ENCODE measurements at regions of chr1 and their contacts with region 1.

Region 1: GRCh38 chr1:110034451-110035235 is at the start of gene STRIP1:
- H3K4me3 ChIP-seq: peak within 1 kb of the TSS; percentile 80
- H3K27ac ChIP-seq: peak within 1 kb of the TSS; percentile 76
- H3K4me1 ChIP-seq: peaks cover 4% of the 10 kb centered on the region; the same call in 1 of the 2 replicates
- CTCF ChIP-seq: no peak

Region 2: DNA sequence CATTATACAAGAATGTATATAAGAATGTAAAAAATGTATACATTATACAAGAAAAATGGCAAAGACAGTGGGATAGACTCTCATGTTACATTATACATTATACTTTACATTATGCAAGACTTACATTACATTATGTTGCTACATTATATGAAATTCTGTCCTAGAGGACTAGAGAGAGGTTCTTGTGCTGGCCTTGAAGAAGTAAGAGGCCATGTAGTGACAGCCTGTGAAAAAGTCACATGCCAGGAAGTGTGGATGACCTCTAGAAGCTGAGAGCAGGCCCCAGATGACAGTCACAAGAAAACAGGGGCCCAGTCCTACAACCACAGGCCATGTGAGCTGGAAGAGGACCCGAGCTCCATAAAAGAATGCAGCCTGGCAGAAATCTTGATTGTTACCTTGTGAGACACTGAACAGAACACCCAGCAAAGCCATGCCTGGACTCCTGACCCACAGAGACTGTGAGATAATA is 80.6 kb before region 1 on chr1:
- CTCF ChIA-PET with region 1: no interaction called
- POLR2A ChIA-PET with region 1: no interaction called
- H3K4me3 ChIP-seq: no peak overlapping the region
- H3K27ac ChIP-seq: no peak overlapping the region
- H3K4me1 ChIP-seq: no peaks in the 10 kb centered on the region
- CTCF ChIP-seq: no peak

Region 3: DNA sequence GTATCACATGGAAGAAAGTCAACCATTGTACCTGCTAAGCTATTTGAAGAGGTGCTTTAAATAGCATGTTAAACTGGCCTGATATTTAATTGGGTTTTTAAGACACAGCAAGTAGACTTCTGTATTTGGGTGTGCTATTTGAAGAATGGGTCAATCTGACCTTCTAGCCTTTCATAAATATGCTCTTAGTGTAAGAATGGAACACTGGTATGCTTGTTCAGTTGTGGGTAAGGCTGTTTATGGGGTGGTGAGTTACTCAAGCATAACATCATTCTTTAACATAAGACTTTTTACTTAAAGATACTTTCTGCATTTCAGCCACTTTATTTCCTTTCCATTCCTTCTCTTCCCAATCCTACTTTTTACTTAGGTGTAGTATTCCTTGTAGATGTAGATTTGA is 28.7 kb before region 1 on chr1:
- CTCF ChIA-PET with region 1: interaction called, 17 read pairs
- POLR2A ChIA-PET with region 1: no interaction called
- H3K4me3 ChIP-seq: no peak overlapping the region
- H3K27ac ChIP-seq: no peak overlapping the region
- H3K4me1 ChIP-seq: peaks cover 25% of the 10 kb centered on the region
- CTCF ChIP-seq: no peak

Region 4: GRCh38 chr1:110011527-110012041 is 23.1 kb before region 1 on chr1:
- CTCF ChIA-PET with region 1: interaction called, 17 read pairs
- POLR2A ChIA-PET with region 1: no interaction called
- H3K4me3 ChIP-seq: no peak overlapping the region
- H3K27ac ChIP-seq: no peak overlapping the region
- H3K4me1 ChIP-seq: peaks cover 7% of the 10 kb centered on the region; the same call in 1 of the 2 replicates
- CTCF ChIP-seq: peak; percentile 42; the same call in 1 of the 2 replicates

Region 5: DNA sequence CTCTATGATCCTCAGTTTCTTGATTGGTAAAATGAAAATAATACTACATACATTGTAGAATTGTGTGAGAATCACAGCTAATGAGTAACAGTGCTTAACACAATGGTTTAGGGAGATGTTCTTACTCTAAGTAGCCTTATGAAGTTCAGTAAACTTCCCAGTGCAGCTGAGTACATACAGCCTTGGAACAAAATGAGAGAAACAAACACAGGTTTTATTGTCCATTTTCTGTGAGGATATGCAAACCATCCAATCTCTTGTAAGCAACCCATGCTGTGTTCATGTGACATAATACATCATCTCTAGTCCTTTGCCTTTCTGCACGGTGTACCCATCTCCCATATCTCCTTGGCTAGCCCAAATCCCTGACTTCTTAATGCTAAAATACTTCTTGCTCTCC is 14.9 kb before region 1 on chr1:
- CTCF ChIA-PET with region 1: interaction called, 18 read pairs
- POLR2A ChIA-PET with region 1: interaction called, 6 read pairs
- H3K4me3 ChIP-seq: no peak overlapping the region
- H3K27ac ChIP-seq: no peak overlapping the region
- H3K4me1 ChIP-seq: no peaks in the 10 kb centered on the region
- CTCF ChIP-seq: no peak

Region 6: DNA sequence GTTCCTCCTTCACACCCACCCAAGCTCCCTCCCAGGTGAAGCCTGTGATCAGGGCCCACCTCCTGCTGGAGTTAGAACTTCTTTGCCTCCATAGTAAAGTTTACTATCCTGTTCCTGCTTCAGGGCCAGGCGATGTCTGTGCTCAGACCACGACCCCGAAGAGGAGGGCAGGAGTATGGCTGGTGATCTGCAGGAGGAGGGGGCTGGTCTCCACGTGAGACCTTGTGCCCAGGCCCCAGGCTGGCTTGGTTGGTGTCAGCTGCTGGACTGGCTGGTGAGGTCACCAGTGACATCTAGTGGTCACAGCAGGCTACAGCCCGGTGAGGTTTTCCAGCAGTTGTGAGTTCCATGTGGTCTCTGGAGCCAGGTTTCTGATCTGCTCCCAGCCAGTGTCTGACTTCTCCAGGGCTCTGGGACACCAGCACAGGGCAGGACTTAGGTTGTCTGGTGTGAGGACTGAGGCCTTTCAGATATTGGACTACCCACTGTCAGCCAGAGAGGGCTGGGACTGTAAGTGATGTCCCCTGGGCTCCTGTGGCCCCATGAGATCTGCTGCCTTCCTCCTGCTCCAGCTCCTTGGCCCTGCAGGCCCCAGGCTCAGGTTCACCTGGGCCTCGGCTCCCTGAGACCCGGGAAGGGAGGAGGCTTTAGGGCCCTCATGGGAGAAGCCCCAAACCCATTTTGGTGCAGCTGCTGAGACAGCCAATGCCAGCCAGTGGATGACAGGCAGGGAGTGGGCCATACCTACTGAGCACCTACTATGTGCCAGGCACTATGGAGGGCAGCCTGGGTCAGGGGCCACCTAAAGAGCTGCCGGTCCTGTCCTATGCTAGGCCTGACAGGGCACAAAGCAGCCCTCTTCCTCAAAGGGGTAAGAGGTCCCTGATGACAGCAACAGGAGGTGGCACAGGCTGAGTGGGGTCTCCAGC is 71.6 kb after region 1 on chr1:
- CTCF ChIA-PET with region 1: interaction called, 24 read pairs
- POLR2A ChIA-PET with region 1: no interaction called
- H3K4me3 ChIP-seq: no peak overlapping the region
- H3K27ac ChIP-seq: no peak overlapping the region
- H3K4me1 ChIP-seq: no peaks in the 10 kb centered on the region
- CTCF ChIP-seq: peak; percentile 87

Region 7: DNA sequence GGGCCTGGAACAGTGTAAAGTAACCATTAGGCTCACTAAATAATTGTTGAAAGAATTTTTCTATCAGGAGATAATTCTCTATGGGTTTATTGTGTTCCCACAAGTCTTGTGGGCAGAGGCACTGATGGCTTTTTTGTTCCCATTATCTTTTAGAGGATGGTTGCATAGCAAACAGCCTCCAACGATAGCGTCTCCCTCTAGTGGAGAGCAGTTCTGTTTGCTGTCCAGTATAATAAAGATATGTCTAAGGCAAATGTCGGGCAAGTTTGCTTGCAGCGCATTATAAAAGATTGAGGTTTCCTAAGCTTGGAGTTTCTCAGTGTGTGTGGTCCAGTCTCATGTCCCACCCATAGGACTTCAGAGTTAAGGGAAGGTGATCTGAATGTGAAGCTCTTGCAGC is 114.3 kb after region 1 on chr1:
- CTCF ChIA-PET with region 1: no interaction called
- POLR2A ChIA-PET with region 1: no interaction called
- H3K4me3 ChIP-seq: no peak overlapping the region
- H3K27ac ChIP-seq: no peak overlapping the region
- H3K4me1 ChIP-seq: no peaks in the 10 kb centered on the region
- CTCF ChIP-seq: no peak

Measured in HEK293 (cell line).